Activated CD4-positive, alpha-beta T cell treated with anti-CD3 and anti-CD28 coated beads for 36 hours (primary cell): ENCODE measurements at regions of chr3 and their contacts with region 1.

Region 1: GRCh38 chr3:32947789-32948238 is 3.6 kb upstream of the CCR4 start:
- DNase-seq: peak; percentile 97
- ATAC-seq: peak; percentile 72
- H3K4me3 Mint-ChIP-seq: no peak overlapping the region
- H3K27ac Mint-ChIP-seq: no peak overlapping the region
- H3K4me1 Mint-ChIP-seq: peaks cover 49% of the 10 kb centered on the region
- H3K27me3 Mint-ChIP-seq: no peaks in the 10 kb centered on the region

Region 2: DNA sequence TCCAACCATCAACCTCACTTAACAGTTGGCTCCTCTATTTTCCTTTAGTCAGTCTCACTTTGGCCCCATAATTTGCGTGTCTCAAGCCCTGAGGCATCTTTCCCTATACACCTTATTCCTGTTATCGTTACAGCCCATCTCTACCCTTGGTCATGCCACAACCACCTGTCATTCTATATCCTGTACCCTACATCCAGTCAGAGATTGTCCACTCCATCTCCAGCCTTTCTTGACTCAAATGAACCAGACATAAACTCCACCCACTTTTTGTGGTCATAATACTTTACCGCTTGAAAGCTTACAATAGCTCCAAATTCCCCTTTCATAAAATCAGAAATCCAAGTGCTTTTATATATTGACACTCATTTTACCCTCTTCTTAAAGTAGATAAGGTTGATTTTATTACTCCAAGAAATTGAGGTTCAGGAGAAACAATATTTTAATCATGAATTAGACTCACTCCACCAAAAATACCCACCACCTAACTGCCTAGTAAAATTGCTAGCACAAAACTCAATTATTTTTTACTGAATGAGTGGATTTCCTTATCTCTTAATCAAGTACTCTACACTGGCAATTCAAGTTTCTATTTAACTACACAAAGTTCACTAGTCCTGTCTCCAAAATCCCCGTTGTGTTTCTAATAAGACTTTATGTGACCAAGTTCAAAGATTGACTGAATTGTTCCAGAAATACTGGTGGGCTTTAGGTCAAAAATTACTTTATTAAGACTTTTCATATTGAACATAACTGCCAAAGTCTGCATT is 12.8 kb after region 1 on chr3:
- CTCF ChIA-PET with region 1: interaction called, 7 read pairs
- POLR2A ChIA-PET with region 1: interaction called, 3 read pairs
- intact Hi-C with region 1: loop called in 1 of 2 experiments (anchors 1 kb)
- DNase-seq: no peak
- ATAC-seq: peak; percentile 61
- H3K4me3 Mint-ChIP-seq: peak overlapping the region; percentile 8
- H3K27ac Mint-ChIP-seq: peak overlapping the region; percentile 97
- H3K4me1 Mint-ChIP-seq: peaks cover 77% of the 10 kb centered on the region
- H3K27me3 Mint-ChIP-seq: no peaks in the 10 kb centered on the region

Region 3: GRCh38 chr3:33023172-33024136 is 75.6 kb after region 1 on chr3:
- CTCF ChIA-PET with region 1: interaction called, 16 read pairs
- POLR2A ChIA-PET with region 1: interaction called, 5 read pairs
- intact Hi-C with region 1: loop called (anchors 1 kb)
- DNase-seq: no peak
- ATAC-seq: peak; percentile 85
- H3K4me3 Mint-ChIP-seq: peak overlapping the region; percentile 34
- H3K27ac Mint-ChIP-seq: peak overlapping the region; percentile 91
- H3K4me1 Mint-ChIP-seq: peaks cover 56% of the 10 kb centered on the region
- H3K27me3 Mint-ChIP-seq: no peaks in the 10 kb centered on the region

Region 4: GRCh38 chr3:33063651-33064051 is 115.8 kb after region 1 on chr3:
- CTCF ChIA-PET with region 1: interaction called, 190 read pairs
- POLR2A ChIA-PET with region 1: interaction called, 5 read pairs
- intact Hi-C with region 1: loop called (anchors 1 kb)
- DNase-seq: peak; percentile 83
- ATAC-seq: peak; percentile 57
- H3K4me3 Mint-ChIP-seq: peak overlapping the region; percentile 34
- H3K27ac Mint-ChIP-seq: peak overlapping the region; percentile 97
- H3K4me1 Mint-ChIP-seq: peaks cover 70% of the 10 kb centered on the region
- H3K27me3 Mint-ChIP-seq: no peaks in the 10 kb centered on the region

Region 5: DNA sequence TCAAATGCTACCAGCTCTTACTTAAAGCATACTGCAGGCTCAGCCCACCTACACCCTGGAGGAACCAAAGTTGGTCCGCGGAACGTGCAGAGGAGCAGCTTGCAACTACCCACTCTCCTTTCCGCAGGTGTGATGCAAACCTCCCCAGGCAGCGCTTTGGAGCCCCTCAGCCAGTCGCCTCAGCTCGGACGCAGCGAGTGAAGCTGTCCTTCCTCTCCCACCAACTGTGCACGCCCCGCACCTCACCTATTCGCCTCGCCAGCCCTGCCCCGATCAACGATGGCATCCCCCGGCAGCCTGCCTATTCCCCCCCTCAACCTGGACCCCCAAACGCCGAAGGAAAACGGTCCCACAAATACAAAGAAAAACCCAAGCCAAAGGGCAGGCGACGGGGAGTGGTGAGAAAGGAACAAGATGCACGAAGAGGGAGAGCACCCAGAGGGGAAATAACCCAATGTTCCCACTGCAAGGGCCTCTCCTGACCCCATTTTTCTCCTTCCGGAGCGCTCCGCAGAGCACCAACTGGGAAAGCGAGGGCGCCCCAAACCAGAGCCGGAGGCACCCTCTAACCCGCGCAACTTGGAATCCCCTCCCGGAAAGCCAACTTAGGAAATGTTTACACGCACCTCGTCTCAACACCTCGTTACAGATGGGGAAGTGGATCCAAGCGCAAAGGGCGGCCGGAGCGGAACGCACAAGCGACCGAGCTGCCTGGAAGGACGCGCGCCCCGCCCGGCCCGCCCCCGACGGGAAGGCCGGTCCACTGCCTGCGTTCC is 148.5 kb after region 1 on chr3:
- CTCF ChIA-PET with region 1: interaction called, 5 read pairs
- POLR2A ChIA-PET with region 1: no interaction called
- intact Hi-C with region 1: loop called in 1 of 2 experiments (anchors 1 kb)
- DNase-seq: peak; percentile 66
- ATAC-seq: peak; percentile 46
- H3K4me3 Mint-ChIP-seq: peak overlapping the region; percentile 99
- H3K27ac Mint-ChIP-seq: peak overlapping the region; percentile 92
- H3K4me1 Mint-ChIP-seq: peaks cover 40% of the 10 kb centered on the region
- H3K27me3 Mint-ChIP-seq: no peaks in the 10 kb centered on the region

Region 6: GRCh38 chr3:33260104-33260503 is 312.3 kb after region 1 on chr3:
- CTCF ChIA-PET with region 1: no interaction called
- POLR2A ChIA-PET with region 1: no interaction called
- intact Hi-C with region 1: no loop called
- DNase-seq: no peak
- ATAC-seq: no peak
- H3K4me3 Mint-ChIP-seq: no peak overlapping the region
- H3K27ac Mint-ChIP-seq: no peak overlapping the region
- H3K4me1 Mint-ChIP-seq: no peaks in the 10 kb centered on the region
- H3K27me3 Mint-ChIP-seq: peaks cover 6% of the 10 kb centered on the region

Region 7: DNA sequence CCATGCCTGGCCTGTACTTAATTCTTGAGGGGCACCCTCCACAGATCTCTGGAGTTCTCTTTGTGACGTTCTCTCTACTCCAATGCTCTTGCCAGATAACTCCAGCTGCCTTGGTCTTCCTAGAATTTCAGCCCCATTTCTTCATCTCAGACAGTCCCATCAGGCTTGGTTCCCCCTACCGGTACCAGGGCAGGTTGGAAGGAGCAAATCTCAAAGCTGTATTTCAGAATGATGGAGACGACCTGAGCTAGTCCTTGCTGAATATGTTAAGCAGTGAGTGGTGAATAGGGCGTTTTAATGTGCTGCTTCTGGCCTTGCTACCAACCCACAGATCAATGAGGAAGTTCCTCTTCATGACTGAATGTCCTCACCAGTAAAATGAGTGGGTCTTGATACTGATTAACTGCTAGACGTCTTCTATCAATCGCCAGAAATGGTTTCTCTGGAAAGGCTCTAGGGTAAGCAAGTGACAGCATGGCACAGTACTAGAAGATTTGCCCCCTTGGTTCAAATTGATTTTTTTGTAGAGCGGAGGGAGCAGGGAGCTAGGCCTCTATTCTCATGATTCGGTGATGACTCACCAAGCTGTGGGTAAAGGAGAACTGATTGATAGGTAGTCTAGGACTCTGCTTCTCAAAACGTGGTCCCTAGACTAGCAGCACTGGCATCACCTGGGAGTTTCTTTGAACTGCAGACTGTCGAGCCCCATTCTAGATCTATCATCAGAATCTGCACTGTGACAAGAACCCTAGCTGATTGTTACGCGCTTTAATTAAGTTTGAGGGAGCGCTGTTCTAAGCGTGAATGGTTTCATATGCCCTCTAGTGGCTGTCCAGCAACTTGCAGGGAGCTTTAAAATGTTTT is 424.6 kb after region 1 on chr3:
- CTCF ChIA-PET with region 1: interaction called, 13 read pairs
- POLR2A ChIA-PET with region 1: no interaction called
- intact Hi-C with region 1: loop called (anchors 1 to 2 kb)
- DNase-seq: peak; percentile 62
- ATAC-seq: peak; percentile 98
- H3K4me3 Mint-ChIP-seq: no peak overlapping the region
- H3K27ac Mint-ChIP-seq: no peak overlapping the region
- H3K4me1 Mint-ChIP-seq: peaks cover 11% of the 10 kb centered on the region
- H3K27me3 Mint-ChIP-seq: peaks cover 13% of the 10 kb centered on the region